Calu3 (cell line): ENCODE measurements at regions of chr7 and their contacts with region 1.

Region 1: DNA sequence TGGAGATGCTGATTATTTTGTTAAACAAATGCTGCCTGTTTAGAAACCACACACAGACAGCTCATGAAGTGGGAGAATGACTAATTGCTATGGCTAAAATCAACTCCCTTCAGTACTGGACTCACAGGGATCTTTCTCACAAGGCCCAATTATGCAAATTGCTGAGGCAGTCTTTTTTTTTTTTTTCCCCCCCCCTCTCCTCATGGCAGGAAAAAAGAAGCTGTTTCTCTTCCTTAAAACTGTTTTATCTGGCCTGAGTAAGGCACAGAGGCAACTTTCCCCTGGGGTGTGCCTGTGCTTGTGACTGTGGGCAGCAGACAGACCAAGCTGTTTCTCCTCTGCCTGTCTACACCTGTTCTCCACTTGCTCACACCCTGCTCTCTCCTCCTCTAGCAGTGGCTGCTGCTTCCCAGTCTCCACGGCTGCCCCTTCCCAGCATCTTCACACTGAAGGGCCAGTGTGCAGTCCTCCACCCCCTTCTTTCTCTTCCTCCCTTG is 65.4 kb upstream of the STEAP1B start:
- DNase-seq: peak; percentile 45
- H3K4me3 Mint-ChIP-seq: peak overlapping the region; percentile 64
- H3K27ac Mint-ChIP-seq: peak overlapping the region; percentile 82
- H3K4me1 Mint-ChIP-seq: peaks cover 73% of the 10 kb centered on the region
- H3K27me3 Mint-ChIP-seq: no peaks in the 10 kb centered on the region
- CTCF ChIP-seq: no peak

Region 2: GRCh38 chr7:22577396-22578001 is 12.1 kb after region 1 on chr7:
- CTCF ChIA-PET with region 1: interaction called, 64 read pairs
- intact Hi-C with region 1: loop called (anchors 1 kb)
- DNase-seq: peak; percentile 71
- H3K4me3 Mint-ChIP-seq: peak overlapping the region; percentile 59
- H3K27ac Mint-ChIP-seq: peak overlapping the region; percentile 96
- H3K4me1 Mint-ChIP-seq: peaks cover 75% of the 10 kb centered on the region
- H3K27me3 Mint-ChIP-seq: no peaks in the 10 kb centered on the region
- CTCF ChIP-seq: no peak